Activated T-helper 2 cell treated with anti-CD3 and anti-CD28 coated beads, Interferon-gamma antibody, Interleukin-2, Interleukin-4, amounts not matched to agents 10 μg/mL and 5 μg/mL and 100 μg/mL, durations not matched to agents 14 hours and 24 hours and 36 hours (primary cell): ENCODE measurements at regions of chr1 and their contacts with region 1.

Region 1: GRCh38 chr1:86913896-86914634 is at the start of gene SELENOF:
- DNase-seq: peak; percentile 99
- H3K4me3 Mint-ChIP-seq: no peak within 1 kb of the TSS
- H3K27ac Mint-ChIP-seq: no peak within 1 kb of the TSS
- H3K4me1 Mint-ChIP-seq: peaks cover 31% of the 10 kb centered on the region
- H3K27me3 Mint-ChIP-seq: no peaks in the 10 kb centered on the region
- total RNA-seq, gene SELENOF: 187 and 192 TPM in 2 replicates

Region 2: DNA sequence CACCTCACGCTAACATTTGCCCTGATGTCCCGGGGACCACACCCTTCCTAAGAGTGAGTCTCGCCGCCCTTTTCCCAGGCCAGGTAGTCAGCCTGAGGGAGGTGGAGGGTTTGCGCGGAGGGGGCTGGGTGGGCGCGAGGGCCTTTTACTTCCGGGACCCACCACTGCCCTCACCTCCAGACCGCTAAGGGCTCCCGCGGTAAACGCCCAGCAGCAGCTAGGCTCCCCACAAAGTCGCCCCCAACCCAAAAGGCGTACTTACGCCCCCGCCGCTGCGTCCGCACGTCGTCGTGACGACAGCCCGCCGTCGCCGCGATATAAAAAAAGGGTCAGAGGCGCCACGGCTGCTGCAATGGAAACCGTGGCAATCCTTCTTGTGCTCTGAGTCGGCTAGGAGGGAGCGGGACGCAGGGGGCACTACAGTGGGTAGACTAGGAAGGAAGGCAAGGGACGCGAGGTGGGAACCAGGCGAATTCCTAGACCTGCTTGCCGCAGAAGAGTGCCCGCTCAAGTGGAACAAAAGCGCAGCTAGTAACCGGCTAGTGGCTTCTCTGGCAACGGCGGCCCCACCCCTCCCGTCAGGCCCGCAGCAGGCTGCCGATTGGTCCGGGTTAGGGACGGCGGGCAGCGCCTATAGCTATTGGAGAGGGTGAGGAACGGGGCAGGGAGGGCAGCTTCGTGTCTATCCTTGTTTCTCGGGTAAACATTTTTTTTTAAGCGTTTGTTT is 518.1 kb before region 1 on chr1 and contains the start of gene ODF2L:
- intact Hi-C with region 1: loop called (anchors 10 kb)
- DNase-seq: peak; percentile 88
- H3K4me3 Mint-ChIP-seq: peak within 1 kb of the TSS; percentile 89
- H3K27ac Mint-ChIP-seq: peak within 1 kb of the TSS; percentile 85
- H3K4me1 Mint-ChIP-seq: peaks cover 33% of the 10 kb centered on the region
- H3K27me3 Mint-ChIP-seq: peaks cover 10% of the 10 kb centered on the region
- total RNA-seq, gene ODF2L: 21.8 and 22.5 TPM in 2 replicates

Region 3: GRCh38 chr1:86866665-86867064 is 47.4 kb before region 1 on chr1:
- intact Hi-C with region 1: loop called (anchors 10 kb)
- DNase-seq: no peak
- H3K4me3 Mint-ChIP-seq: no peak overlapping the region
- H3K27ac Mint-ChIP-seq: no peak overlapping the region
- H3K4me1 Mint-ChIP-seq: peaks cover 12% of the 10 kb centered on the region
- H3K27me3 Mint-ChIP-seq: no peaks in the 10 kb centered on the region

Region 4: GRCh38 chr1:87045761-87046304 is 131.8 kb after region 1 on chr1:
- intact Hi-C with region 1: loop called (anchors 1 kb)
- DNase-seq: peak; percentile 52
- H3K4me3 Mint-ChIP-seq: peak overlapping the region; percentile 45
- H3K27ac Mint-ChIP-seq: peak overlapping the region; percentile 90
- H3K4me1 Mint-ChIP-seq: peaks cover 48% of the 10 kb centered on the region
- H3K27me3 Mint-ChIP-seq: no peaks in the 10 kb centered on the region

Region 5: GRCh38 chr1:87091425-87091824 is 177.4 kb after region 1 on chr1:
- intact Hi-C with region 1: no loop called
- DNase-seq: no peak
- H3K4me3 Mint-ChIP-seq: no peak overlapping the region
- H3K27ac Mint-ChIP-seq: no peak overlapping the region
- H3K4me1 Mint-ChIP-seq: peaks cover 14% of the 10 kb centered on the region
- H3K27me3 Mint-ChIP-seq: no peaks in the 10 kb centered on the region

Region 6: GRCh38 chr1:87328272-87329050 is 414.4 kb after region 1 on chr1 and contains the start of gene LMO4:
- intact Hi-C with region 1: loop called (anchors 2 kb)
- DNase-seq: peak; percentile 76
- H3K4me3 Mint-ChIP-seq: peak within 1 kb of the TSS; percentile 92
- H3K27ac Mint-ChIP-seq: peak within 1 kb of the TSS; percentile 89
- H3K4me1 Mint-ChIP-seq: peaks cover 32% of the 10 kb centered on the region
- H3K27me3 Mint-ChIP-seq: peaks cover 26% of the 10 kb centered on the region
- total RNA-seq, gene LMO4: 20.9 and 21.7 TPM in 2 replicates